A549 (cell line): ENCODE measurements at regions of chr2 and their contacts with region 1.

Region 1: GRCh38 chr2:11129598-11130449 is 25.4 kb upstream of the SLC66A3 start:
- DNase-seq: peak; percentile 59 to 74
- ATAC-seq: peak; percentile 66 to 81
- H3K4me3 ChIP-seq: peak overlapping the region; percentile 45
- H3K27ac ChIP-seq: peak overlapping the region; percentile 67 to 77
- H3K4me1 ChIP-seq: peaks cover 16% of the 10 kb centered on the region; the same call in 2 of the 3 replicates
- CTCF ChIP-seq: peak; percentile 72
- EP300 ChIP-seq: no peak
- POLR2A ChIP-seq: no peak
- RAD21 ChIP-seq: peak; percentile 74 to 86

Region 2: GRCh38 chr2:10369269-10370255 is 760.3 kb before region 1 on chr2:
- CTCF ChIA-PET with region 1: no interaction called
- POLR2A ChIA-PET with region 1: no interaction called
- DNase-seq: no peak
- ATAC-seq: no peak
- H3K4me3 ChIP-seq: no peak overlapping the region
- H3K27ac ChIP-seq: peak overlapping the region in 1 of 2 experiments; percentile 30; a peak in 1 of 6 replicates
- H3K4me1 ChIP-seq: no peaks in the 10 kb centered on the region; the same call in 2 of the 3 replicates
- CTCF ChIP-seq: no peak
- EP300 ChIP-seq: no peak
- POLR2A ChIP-seq: no peak
- RAD21 ChIP-seq: no peak

Region 3: GRCh38 chr2:11103984-11104793 is 25.6 kb before region 1 on chr2:
- CTCF ChIA-PET with region 1: interaction called, 46 read pairs
- POLR2A ChIA-PET with region 1: no interaction called
- DNase-seq: no peak
- ATAC-seq: no peak
- H3K4me3 ChIP-seq: no peak overlapping the region
- H3K27ac ChIP-seq: no peak overlapping the region
- H3K4me1 ChIP-seq: no peaks in the 10 kb centered on the region
- CTCF ChIP-seq: no peak
- EP300 ChIP-seq: no peak
- POLR2A ChIP-seq: no peak
- RAD21 ChIP-seq: no peak

Region 4: GRCh38 chr2:11203480-11203879 is 73.7 kb after region 1 on chr2:
- CTCF ChIA-PET with region 1: interaction called, 15 read pairs
- POLR2A ChIA-PET with region 1: no interaction called
- DNase-seq: peak; percentile 71
- ATAC-seq: peak; percentile 85 to 89
- H3K4me3 ChIP-seq: no peak overlapping the region
- H3K27ac ChIP-seq: 0 out of 6 replicates have a peak overlapping the region, but pooled peaks of 1 of the 2 experiments have one; percentile 3
- H3K4me1 ChIP-seq: peaks cover 28% of the 10 kb centered on the region
- CTCF ChIP-seq: no peak
- EP300 ChIP-seq: no peak; a peak in 1 of 5 replicates
- POLR2A ChIP-seq: no peak
- RAD21 ChIP-seq: no peak

Region 5: GRCh38 chr2:11344342-11344955 is 214.6 kb after region 1 on chr2 and contains the start of gene ROCK2:
- CTCF ChIA-PET with region 1: interaction called, 21 read pairs
- POLR2A ChIA-PET with region 1: interaction called, 4 read pairs
- DNase-seq: peak; percentile 79 to 91
- ATAC-seq: peak; percentile 71 to 72
- H3K4me3 ChIP-seq: peak within 1 kb of the TSS; percentile 92
- H3K27ac ChIP-seq: peak within 1 kb of the TSS; percentile 94 to 95
- H3K4me1 ChIP-seq: peaks cover 45% of the 10 kb centered on the region
- CTCF ChIP-seq: no peak
- EP300 ChIP-seq: no peak
- POLR2A ChIP-seq: peak; percentile 43
- RAD21 ChIP-seq: peak in 1 of 2 experiments; percentile 16; a peak in 1 of 5 replicates
- polyA plus RNA-seq, gene ROCK2: 33.4 and 38.7 TPM in 2 replicates

Region 6: DNA sequence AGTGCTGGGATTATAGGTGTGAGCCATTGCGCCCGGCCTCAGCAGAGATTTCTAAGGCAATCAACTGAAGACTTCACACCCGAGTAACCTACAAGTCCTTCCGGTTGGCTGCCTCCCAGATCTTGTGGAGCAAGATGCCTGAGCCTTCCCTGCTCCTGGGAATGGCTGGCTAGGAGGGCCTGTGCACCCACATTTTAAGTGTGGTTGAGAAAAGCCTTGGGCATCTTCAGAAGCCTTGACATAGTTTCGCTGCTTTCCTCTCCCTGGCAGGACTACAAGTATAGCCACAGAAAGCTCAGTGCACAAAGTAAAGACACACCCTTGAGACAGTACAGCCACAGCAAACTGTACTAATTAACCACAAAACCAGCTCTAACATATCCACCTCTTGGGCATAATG is 300.9 kb after region 1 on chr2:
- CTCF ChIA-PET with region 1: interaction called, 21 read pairs
- POLR2A ChIA-PET with region 1: no interaction called
- DNase-seq: no peak
- ATAC-seq: no peak
- H3K4me3 ChIP-seq: no peak overlapping the region
- H3K27ac ChIP-seq: no peak overlapping the region
- H3K4me1 ChIP-seq: no peaks in the 10 kb centered on the region
- CTCF ChIP-seq: no peak
- EP300 ChIP-seq: no peak
- POLR2A ChIP-seq: no peak
- RAD21 ChIP-seq: no peak

Region 7: DNA sequence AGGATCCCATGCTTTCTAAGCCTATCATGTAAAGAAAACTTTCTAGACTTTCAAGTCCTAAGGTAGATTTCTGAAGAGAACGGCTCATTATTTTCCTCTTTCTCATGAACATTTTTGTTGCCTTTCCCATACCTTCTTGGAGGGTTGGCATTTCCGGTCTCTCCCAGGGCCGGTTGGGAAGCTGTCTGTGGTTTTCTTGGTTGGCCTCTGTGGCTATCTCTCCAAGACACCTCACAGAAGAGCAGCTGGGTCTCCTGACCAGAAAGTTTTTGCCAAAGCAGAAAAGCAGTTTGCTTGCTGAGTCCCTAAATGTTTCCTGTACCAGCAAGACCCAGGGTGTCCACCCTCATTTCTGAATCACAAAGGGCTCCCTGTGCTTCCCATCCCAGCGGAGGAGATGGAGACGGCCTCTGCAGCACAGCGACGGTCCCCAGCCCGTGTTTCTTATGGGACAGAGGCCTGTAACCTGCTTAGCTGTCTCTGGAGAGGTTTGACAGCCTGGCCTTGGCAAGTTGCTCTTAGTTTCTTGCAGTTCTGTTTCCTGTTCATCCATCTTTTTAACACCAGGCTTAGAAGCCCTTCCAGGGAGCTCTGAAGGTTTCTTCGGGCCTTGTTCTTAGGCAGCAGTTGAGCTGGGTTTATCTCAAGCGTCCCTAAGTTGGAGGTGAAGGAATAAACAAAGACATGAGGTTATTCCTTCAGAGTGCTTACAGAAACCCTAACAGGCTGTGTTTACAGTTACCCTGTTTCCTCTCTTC is 443.8 kb after region 1 on chr2:
- CTCF ChIA-PET with region 1: interaction called, 21 read pairs
- POLR2A ChIA-PET with region 1: no interaction called
- DNase-seq: no peak
- ATAC-seq: no peak
- H3K4me3 ChIP-seq: no peak overlapping the region
- H3K27ac ChIP-seq: no peak overlapping the region
- H3K4me1 ChIP-seq: no peaks in the 10 kb centered on the region
- CTCF ChIP-seq: no peak
- EP300 ChIP-seq: no peak
- POLR2A ChIP-seq: no peak
- RAD21 ChIP-seq: no peak